Left cardiac atrium (tissue), 4 donors: ENCODE measurements at regions of chr20 and their contacts with region 1.

Region 1: DNA sequence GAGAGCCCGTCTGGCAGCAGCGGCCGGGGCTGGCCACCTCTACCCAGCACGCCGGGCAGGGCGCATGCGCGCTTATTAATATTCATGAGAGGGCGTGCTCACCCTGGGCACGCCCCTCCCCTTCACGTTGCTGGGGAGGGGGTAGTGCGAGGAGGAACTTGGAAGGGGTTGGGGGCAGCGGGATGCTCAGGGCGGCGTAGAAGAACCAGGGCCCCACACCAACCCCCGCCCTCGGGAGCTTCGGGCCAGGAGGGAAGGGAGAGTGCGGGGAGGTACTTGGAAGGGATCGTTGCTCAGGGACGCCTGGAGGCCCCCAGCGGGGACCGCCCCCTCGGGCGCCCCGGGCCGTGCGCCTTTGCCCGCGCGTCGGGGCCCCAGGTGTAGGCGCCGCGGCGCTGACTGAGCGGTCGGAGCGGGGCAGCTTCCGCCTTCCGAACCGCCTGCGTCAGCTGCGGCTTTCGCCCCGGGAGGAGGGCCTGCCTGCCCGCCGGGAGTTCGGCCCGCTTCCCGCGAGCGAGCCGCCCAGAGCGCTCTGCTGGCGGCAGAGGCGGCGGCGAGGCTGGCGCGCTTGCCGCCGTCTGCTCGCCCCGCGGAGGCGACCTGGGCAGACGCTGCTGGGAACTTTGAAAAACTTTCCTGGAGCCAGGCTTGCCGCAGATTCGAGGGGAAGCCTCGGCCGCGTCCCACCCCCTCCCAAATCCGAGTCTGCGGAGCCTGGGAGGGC is at the start of gene JAG1:
- DNase-seq: peak; percentile 97
- ATAC-seq: peak; percentile 84 to 85
- total RNA-seq, gene JAG1: 32.4 to 42.3 TPM

Region 2: GRCh38 chr20:10469599-10469998 is 204.6 kb before region 1 on chr20:
- intact Hi-C with region 1: loop called in 1 of 2 experiments (anchors 10 kb)
- DNase-seq: peak; percentile 28
- ATAC-seq: peak; percentile 62 to 80

Region 3: GRCh38 chr20:10591956-10592521 is 82.1 kb before region 1 on chr20:
- intact Hi-C with region 1: no loop called
- DNase-seq: no peak
- ATAC-seq: peak; percentile 65 to 75

Region 4: DNA sequence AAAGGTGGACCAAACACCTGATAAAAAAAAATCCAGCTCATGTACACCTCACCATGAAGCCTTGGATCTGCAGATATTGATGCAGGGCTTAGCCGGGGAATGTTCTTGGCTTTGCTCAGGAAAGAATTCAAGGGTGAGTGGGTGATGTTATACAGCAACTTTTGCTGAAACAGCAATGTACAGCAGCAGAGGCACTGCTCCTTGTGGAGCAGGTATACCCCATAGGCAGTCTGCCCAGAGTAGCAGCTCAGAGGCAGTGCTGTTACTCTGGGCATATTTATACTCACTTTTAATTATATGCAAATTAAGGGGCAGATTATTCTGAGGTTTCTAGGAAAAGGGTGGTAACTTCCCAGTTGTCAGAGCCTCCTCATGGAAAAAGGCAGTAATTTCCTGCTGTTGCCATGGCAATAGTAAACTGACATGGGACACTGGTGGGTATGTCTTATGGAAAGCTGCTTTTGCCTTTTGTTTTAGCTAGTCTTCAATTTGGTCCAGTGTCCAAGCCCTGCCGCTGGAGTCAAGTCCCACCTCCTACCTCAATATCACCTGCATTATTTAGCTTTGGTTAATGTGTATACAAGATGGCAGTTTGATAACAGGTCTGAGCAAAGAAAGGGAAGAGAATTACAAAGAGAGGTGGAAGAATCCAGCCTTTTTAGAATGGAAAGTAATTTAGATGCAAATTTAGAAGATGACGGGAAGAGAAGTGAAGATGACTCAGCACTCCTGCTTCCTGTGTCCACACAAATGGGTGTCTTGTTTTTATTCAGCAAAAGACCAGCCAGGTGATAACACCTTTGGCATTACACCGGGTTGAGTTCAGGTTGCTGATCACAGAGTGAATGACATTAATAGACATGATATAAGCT is 109.8 kb after region 1 on chr20:
- intact Hi-C with region 1: no loop called
- DNase-seq: no peak
- ATAC-seq: peak in 1 of 2 donors; percentile 23

Region 5: DNA sequence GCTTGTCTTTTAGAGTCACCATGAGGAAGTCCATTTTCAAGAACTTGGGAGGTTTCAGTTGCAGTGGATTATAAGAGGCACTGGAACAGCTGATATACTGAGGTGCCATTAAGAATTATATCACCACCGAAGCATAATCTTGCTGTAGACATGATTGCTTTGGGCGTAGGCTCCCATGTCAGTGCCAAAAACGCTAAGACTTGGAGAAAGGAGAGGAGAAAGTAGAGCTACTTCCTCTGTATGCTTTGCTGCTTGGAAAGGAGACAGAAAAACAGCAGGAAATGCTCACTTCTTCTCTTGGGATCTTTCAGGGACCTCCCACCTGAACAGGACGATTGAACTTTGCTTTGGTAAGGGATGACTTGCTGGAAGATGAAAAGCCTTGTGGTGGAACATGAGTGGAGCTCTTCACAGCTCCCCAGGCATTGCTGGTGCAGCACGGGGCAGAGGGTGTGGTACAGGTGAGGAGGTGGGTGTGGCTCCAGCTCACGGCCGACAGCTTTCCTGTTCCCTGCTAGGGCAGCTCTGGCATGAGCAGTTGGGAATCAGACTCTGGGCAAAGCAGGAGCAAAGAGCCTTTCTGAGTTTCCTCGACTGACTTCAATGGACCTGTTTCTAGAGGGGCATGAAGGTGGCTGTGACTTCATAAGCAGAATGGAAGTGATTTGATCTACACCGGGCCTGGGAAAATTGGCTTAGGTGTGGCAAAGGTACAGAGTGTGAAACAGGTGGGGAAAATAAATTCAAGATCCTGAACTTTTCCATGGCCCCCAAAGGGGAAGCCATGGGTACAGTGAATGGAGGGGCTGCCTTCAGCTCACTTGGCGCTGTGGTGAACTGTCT is 190.1 kb after region 1 on chr20:
- intact Hi-C with region 1: loop called in 1 of 2 experiments (anchors 10 kb)
- DNase-seq: no peak
- ATAC-seq: peak; percentile 57 to 92

Region 6: GRCh38 chr20:11204926-11205768 is 531.0 kb after region 1 on chr20:
- intact Hi-C with region 1: loop called in 1 of 2 experiments (anchors 2 kb)
- DNase-seq: peak; percentile 69
- ATAC-seq: peak; percentile 86 to 92

Region 7: DNA sequence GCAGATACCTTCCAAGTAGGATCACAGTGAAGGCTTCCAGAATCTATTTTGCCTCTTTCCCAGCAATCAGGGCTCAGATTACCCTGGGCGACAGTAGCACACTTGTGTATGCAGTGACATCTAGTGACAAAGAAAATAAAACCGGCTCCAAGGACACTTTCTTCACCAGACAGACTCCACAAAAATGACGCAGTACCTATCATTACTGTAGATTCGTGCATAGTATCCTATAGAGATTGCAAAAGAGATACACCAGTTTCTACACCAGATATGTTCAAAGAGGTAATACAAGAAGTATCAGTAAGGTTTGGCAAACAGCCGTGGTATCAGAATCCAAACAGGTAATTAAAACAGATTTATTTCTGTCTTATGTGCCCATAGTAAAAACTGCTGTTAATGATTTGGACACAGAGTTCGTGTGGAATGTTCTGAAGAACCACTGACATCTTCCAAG is 600.0 kb after region 1 on chr20:
- intact Hi-C with region 1: loop called in 1 of 2 experiments (anchors 5 kb)
- DNase-seq: peak; percentile 25
- ATAC-seq: peak; percentile 89 to 90